ENCODE measurements at regions of chr3 and their contacts with region 1.

Region 1: GRCh38 chr3:112111785-112112402 is 21.2 kb downstream of the GCSAM start:
- DNase-seq: peak; percentile 73
- ATAC-seq: peak; percentile 91
- H3K4me3 Mint-ChIP-seq: no peak overlapping the region
- H3K27ac Mint-ChIP-seq: no peak overlapping the region
- H3K4me1 Mint-ChIP-seq: peaks cover 14% of the 10 kb centered on the region
- H3K27me3 Mint-ChIP-seq: no peaks in the 10 kb centered on the region
- CTCF ChIP-seq: peak; percentile 83

Region 2: DNA sequence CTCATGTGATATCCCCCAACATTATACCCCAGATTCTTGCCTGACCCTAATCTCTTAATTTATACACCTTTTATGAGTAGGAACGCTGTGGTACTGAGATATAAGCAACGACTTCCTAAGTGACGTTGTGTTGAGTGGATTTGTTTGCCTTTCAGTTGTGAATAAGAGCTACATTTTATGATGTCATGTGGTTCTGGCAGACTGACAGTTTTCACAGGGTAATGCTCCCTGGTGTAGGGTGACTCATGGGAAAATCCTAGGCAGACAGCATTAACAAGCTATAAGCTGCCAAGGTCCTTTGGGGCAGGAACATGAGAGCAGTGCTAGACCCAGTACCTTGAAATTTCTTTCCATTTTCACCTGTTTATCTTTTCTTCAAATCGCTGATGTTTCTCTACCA is 14.5 kb before region 1 on chr3:
- CTCF ChIA-PET with region 1: interaction called, 18 read pairs
- POLR2A ChIA-PET with region 1: no interaction called
- intact Hi-C with region 1: no loop called
- DNase-seq: peak; percentile 42
- ATAC-seq: peak; percentile 91
- H3K4me3 Mint-ChIP-seq: no peak overlapping the region
- H3K27ac Mint-ChIP-seq: no peak overlapping the region
- H3K4me1 Mint-ChIP-seq: peaks cover 22% of the 10 kb centered on the region
- H3K27me3 Mint-ChIP-seq: no peaks in the 10 kb centered on the region
- CTCF ChIP-seq: no peak

Region 3: DNA sequence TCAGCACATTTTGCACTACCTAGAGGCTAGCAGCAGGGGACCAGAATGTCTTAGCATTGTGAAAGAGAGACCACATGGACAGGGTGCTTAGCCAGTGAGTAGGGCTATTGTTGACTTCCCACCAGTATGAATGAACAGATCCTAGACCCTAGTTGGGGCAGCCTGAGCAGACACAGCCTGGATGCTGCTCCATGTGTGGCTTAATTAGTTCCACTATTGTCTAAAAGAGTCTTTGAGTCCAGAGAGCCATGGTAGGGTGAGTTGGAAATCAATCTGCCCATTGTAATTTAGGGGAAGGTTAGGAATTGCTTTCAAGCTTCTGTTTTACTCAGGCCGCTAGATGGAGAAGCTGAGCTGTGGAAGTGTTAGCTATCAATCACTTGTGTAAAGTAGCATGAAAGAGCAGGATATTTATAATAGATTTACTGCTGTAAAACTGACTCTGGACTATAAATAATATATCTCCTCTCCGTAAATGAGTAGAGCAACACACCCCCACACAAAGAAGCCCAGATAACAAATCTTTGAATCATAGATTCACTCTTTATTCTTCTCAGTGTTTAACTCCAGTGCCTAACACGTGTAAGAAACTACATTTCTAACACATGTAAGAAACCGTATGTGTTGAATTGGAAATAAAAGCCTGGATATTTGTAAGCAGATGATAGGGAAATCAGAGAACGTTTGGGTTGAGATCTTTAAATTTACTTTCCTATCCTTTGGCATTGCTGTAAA is 25.2 kb after region 1 on chr3:
- CTCF ChIA-PET with region 1: interaction called, 39 read pairs
- POLR2A ChIA-PET with region 1: interaction called, 3 read pairs
- intact Hi-C with region 1: no loop called
- DNase-seq: peak; percentile 65
- ATAC-seq: no peak
- H3K4me3 Mint-ChIP-seq: no peak overlapping the region
- H3K27ac Mint-ChIP-seq: peak overlapping the region; percentile 44
- H3K4me1 Mint-ChIP-seq: peaks cover 57% of the 10 kb centered on the region
- H3K27me3 Mint-ChIP-seq: no peaks in the 10 kb centered on the region
- CTCF ChIP-seq: peak; percentile 75

Region 4: DNA sequence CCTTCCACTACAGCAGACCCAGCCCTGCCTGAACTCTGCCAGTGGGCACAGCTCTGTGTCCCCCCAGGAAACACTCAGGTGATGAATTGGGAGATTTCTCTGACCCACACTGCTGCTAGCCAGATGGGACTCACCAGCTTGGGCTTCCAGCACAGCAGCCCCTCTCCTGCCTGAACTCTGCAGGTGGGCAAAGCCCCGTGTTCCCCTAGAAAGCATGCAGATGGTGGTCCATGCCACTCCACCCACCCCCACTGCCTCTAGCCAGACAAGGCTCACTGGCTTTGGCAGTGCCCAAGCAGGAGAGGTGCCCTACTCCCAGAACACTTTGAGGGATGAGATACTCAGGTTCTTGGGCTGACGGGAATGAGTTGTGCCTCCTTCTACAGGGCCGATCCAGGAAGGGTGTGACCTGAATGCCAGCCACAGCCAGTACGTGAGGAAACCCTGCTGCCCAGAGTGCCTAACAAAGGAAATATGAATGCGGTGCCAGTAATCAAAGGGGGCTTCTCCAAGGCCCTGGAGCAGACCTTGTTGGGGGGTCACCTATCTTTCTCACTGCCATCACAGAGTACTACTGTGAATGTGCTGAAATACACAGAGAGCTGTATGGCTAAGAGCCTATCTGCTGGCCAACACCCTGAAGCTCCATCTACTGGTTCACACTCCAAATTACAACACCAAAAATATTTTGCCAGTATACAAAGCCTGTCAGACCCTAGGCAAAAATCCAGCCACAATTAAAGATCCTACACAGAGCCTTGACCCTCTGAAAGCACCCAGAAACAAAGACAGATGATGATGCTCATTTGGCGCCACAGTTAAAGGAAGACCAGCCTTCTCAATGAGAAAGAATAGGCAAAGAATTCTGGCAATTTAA is 325.5 kb after region 1 on chr3:
- CTCF ChIA-PET with region 1: interaction called, 13 read pairs
- POLR2A ChIA-PET with region 1: no interaction called
- intact Hi-C with region 1: no loop called
- DNase-seq: no peak
- ATAC-seq: peak; percentile 93
- H3K4me3 Mint-ChIP-seq: no peak overlapping the region
- H3K27ac Mint-ChIP-seq: peak overlapping the region; percentile 46
- H3K4me1 Mint-ChIP-seq: peaks cover 36% of the 10 kb centered on the region
- H3K27me3 Mint-ChIP-seq: no peaks in the 10 kb centered on the region
- CTCF ChIP-seq: peak; percentile 32

Region 5: DNA sequence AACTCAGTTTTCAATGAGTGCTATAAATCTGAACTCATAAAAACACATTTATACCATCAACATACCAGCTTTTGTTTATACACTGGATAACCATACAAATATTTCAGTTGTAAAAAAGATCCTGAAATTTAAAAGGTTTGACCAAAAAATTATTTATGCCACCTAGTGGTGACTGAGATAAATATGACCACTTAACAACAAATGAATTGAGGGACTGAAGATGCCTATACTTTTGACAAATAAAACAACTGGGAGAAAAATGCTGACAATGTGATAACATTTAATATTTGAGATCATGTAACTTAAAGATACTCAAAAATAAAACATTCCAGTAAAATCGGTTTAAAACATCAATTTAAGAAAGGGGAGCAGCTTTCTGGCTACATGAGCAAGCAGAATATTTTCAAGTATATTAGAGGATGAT is 419.5 kb after region 1 on chr3:
- CTCF ChIA-PET with region 1: interaction called, 10 read pairs
- POLR2A ChIA-PET with region 1: no interaction called
- intact Hi-C with region 1: no loop called
- DNase-seq: no peak
- ATAC-seq: peak; percentile 45
- H3K4me3 Mint-ChIP-seq: no peak overlapping the region
- H3K27ac Mint-ChIP-seq: no peak overlapping the region
- H3K4me1 Mint-ChIP-seq: peaks cover 5% of the 10 kb centered on the region
- H3K27me3 Mint-ChIP-seq: no peaks in the 10 kb centered on the region
- CTCF ChIP-seq: peak; percentile 57